G401 (cell line): ENCODE measurements at regions of chr7 and their contacts with region 1.

Region 1: DNA sequence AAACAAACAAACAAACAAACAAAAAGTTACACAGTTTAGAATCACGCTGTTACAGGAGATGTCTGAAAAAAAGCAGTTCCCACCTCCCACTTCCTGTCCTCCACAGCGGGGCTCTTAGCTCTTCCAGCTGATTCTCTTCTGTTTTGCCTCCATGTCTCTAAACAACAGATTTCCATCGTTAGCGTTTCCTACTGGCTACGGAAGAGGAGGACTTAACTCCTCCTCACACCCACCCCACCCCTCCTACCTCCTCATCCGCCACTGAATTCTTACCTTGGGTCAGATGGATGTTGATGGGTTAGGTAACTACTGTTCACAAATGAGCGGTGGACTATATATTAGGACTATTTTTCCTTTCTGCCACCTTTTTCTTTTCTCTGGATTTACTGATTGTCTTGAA is 36.8 kb upstream of the NUB1 start:
- DNase-seq: no peak

Region 2: GRCh38 chr7:150974468-150975391 is 330.1 kb before region 1 on chr7:
- in situ Hi-C with region 1: no loop called
- DNase-seq: peak; percentile 64

Region 3: DNA sequence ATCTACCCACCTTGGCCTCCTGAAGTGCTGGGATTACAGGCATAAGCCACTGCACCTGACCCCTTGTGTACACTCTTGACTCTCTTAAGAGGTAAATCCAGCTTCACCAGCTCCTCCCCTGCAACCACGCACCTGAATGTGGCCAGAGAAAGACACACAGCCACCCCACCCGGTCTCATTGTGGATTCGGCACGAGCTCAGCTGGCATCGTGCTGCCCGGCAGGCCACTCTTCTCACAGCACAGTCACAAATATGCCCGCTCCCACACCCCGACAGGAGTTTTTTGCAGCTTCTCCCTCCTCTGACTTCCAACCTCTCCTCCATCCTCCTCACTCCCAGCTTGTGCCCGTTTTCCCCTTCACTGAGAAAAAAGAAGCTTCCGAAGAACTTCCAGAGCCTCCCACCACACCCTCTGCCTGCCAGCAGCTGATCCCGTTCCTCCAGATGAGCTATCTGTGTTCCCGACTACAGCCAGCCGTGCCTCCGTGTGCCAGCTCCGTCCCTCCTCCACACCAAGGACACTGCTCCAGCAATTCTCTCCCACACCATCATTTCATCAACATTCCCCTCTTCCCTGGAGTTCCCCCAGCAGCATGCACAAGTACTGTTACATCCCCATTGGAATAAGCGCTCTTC is 48.3 kb before region 1 on chr7:
- in situ Hi-C with region 1: loop called (anchors 5 kb)
- DNase-seq: no peak

Region 4: DNA sequence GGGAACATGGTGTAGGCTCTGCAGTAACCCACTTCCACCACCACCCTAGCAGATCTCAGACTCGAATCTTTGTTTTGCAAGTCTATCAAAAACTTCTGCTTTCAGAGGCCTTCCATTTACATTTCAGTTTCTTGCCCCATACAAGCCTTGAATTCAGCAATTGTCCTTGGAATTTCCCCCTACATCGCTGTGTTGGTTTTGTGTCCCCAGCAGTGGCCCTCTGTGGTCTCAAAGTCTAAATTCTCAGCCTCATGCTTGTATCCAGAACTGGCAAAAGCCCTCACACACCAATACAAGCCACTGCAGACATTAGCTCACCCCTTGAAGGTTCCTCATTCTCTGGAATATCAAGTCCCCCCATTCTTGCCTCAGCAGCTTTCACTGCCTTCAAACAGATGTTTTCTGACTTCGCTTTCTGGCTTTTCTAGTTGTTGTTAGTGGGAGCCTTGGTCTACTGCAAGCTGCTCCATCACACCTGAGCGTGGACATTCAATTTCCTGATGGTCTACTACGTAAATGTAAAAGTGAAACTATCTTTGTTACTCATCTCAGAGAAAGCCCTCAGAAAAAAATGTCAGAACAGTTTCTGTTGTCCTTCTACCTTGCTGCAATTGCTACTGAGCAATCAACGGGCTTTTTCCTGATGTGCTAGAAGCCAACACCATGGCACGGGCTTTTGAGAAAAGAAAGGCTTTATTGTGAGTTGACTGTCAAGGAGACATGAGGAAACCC is 35.0 kb after region 1 on chr7:
- in situ Hi-C with region 1: no loop called
- DNase-seq: peak; percentile 23

Region 5: DNA sequence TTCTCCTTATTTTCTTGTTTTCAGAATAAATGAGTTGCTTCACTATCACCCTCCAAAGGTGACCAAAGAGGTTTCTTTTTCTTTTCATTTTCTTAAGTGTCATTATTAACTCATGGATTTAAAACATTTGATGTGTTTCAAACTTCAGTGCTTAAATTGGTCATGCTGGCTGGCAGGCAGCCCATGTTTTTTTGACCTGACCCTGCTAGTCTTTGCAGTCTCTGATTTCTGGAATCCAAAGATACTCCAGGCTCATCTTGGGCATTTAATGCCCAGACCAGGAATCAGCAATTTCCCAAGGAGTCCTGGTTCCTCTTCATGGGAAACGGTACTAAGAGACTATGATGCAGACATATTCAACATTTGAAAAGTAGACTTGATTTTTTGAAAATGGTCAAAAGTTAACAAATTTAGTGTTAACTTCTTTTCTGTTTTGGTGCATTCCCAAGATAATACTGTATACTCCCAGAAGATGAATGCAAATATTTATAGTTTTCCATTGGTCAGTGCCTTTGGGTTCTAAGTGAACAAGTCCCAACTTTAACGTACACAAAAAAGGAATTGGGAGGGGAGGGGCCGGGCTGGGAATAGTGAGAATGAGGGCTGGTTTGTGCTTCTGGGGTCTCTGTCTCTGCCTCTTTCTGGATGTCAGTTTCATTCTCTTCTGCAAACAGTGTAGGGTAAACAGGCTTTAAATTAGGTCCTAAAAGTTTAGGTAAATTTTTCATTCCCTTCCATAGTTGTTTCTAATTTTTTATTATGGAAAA is 56.5 kb after region 1 on chr7:
- in situ Hi-C with region 1: loop called (anchors 5 kb)
- DNase-seq: no peak